ENCODE measurements at regions of chr2 and their contacts with region 1.

Region 1: DNA sequence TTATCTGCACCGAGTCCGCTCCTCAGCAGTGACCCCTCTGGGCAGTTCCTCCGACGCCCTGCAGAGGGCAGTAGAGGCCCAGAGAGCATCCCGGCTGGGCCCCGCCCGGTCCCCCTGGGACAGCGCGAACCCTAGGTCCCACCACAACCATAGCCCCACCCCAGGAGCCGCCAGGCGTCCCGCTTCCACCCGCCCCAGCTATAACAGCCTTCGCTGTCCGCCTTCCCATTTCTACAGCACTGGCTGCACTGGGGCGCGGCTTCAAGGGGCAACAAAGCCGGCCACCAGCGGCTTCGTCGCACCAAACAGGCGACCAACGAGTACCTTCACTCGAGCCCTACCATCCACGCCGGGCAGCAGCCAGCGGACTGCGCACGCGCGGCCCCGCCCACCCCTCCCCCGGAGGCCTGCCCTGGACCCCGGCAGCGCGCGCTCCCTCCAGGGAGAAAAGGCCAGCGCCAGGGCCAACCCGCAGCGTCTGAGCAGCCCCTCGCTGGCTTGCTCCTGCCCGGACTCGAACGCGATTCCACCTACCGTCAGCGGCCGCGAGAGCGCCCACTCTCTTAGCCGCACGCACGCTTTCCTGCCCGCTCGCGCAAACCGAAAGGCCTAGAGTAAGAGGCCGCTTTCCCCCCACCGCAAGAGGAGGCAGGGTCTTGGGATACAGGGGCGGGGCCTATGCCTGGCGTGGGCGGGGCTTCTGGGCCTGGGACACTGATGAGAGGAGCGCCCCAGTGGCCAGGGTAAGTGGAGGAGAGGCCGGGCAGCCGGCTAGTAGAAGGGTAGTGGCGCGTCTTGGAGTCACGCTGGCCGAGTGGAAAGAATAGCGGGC is at the start of gene NHEJ1:
- DNase-seq: peak; percentile 97
- ATAC-seq: peak; percentile 89
- H3K4me3 Mint-ChIP-seq: peak within 1 kb of the TSS; percentile 81
- H3K27ac Mint-ChIP-seq: peak within 1 kb of the TSS; percentile 88
- H3K4me1 Mint-ChIP-seq: peaks cover 13% of the 10 kb centered on the region
- H3K27me3 Mint-ChIP-seq: no peaks in the 10 kb centered on the region
- total RNA-seq, gene NHEJ1: 20.7 to 23.8 TPM

Region 2: DNA sequence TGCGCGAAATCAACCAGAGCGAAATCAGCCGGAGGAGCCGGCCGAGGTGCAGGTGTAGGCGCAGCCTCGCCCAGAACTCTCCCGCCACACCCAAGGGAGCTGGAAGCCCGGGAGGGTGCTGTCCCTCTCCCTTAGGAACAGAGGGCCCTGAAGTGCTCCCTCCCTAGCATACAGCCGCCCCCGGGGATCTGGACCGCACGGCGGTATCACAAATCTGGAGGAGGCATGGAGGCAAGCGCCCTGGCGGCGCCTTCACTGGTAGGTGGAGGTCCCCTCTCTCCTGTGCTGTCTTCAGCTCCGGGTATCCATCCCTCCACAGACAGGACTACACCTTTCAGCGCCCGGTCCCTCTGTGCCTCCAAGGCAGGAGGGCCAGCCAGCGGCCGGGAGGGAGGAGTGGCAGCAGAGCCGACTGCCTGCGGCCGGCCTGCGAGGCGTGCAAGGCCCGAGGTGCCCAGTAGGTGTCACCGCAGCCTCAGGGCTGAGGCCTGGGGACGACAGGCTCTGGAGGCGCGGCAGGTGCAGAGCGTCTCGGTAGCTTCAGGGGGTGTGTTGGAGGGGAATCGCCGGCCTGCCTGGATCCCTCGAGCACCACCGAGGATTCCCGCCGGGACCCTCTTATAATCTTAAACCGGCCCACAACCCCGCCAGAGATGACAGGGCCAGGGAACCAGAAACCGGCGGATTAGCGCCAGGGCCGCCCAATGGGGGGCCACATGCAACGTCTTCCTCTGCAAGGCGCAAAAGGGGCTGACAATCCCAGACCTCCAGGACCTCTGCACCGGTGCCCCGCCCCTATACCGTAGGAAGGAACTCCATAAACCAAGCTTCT is 102.5 kb before region 1 on chr2:
- CTCF ChIA-PET with region 1: interaction called, 125 read pairs
- POLR2A ChIA-PET with region 1: no interaction called
- intact Hi-C with region 1: loop called (anchors 1 kb)
- DNase-seq: peak; percentile 90
- ATAC-seq: peak; percentile 97
- H3K4me3 Mint-ChIP-seq: no peak overlapping the region
- H3K27ac Mint-ChIP-seq: no peak overlapping the region
- H3K4me1 Mint-ChIP-seq: peaks cover 19% of the 10 kb centered on the region
- H3K27me3 Mint-ChIP-seq: peaks cover 56% of the 10 kb centered on the region

Region 3: GRCh38 chr2:219206442-219207253 is 46.2 kb after region 1 on chr2 and contains the start of gene ZFAND2B:
- CTCF ChIA-PET with region 1: interaction called, 8 read pairs
- POLR2A ChIA-PET with region 1: interaction called, 6 read pairs
- intact Hi-C with region 1: loop called (anchors 1 kb)
- DNase-seq: peak; percentile 98
- ATAC-seq: peak; percentile 96
- H3K4me3 Mint-ChIP-seq: peak within 1 kb of the TSS; percentile 86
- H3K27ac Mint-ChIP-seq: peak within 1 kb of the TSS; percentile 94
- H3K4me1 Mint-ChIP-seq: peaks cover 34% of the 10 kb centered on the region
- H3K27me3 Mint-ChIP-seq: no peaks in the 10 kb centered on the region
- total RNA-seq, gene ZFAND2B: 21.5 to 27.6 TPM

Region 4: DNA sequence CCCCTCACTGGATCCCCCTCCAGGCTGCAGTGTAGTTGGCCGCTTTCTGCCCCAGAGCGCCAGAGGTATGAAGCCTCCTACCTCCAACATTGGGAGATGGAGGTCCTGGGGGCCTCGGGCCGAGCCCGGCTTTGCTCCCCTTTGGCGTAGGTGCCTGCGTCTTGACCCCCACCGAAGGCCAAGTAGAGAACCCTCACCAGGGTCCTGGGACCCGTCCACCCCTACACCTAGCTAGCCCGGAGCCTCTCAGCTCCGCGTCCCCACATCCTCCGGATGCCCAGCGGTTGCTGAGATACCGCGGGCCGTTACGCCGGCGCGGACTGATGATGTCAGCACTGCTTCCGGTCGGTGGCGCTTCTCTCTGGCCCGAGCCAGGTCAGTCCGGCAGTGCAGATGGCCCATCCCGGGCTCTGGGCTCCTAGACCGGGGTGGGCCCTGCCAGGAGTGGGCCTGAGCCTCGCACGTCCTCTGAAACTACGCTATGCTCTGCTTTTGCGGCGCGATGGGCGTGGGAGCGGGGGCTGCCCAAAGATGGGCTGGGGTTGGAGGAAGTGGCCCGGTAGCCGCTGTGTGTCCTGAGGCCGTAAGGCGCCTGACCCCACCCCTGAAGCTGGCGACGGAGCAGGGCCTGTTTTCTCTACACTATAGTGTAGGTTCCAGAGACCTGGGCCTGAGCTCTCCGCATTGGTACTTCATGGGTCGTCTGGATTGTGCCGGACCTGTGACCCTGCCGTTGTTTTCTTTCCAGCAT is 84.9 kb after region 1 on chr2 and contains the starts of genes GLB1L and STK16:
- CTCF ChIA-PET with region 1: interaction called, 5 read pairs
- POLR2A ChIA-PET with region 1: interaction called, 3 read pairs
- intact Hi-C with region 1: loop called in 1 of 2 experiments (anchors 1 kb)
- DNase-seq: peak; percentile 93
- ATAC-seq: peak; percentile 62
- H3K4me3 Mint-ChIP-seq: peak within 1 kb of the TSS; percentile 89
- H3K27ac Mint-ChIP-seq: peak within 1 kb of the TSS; percentile 100
- H3K4me1 Mint-ChIP-seq: peaks cover 59% of the 10 kb centered on the region
- H3K27me3 Mint-ChIP-seq: no peaks in the 10 kb centered on the region
- total RNA-seq, gene GLB1L: 2.7 to 4.2 TPM
- total RNA-seq, gene STK16: 34.3 to 35.4 TPM

Region 5: DNA sequence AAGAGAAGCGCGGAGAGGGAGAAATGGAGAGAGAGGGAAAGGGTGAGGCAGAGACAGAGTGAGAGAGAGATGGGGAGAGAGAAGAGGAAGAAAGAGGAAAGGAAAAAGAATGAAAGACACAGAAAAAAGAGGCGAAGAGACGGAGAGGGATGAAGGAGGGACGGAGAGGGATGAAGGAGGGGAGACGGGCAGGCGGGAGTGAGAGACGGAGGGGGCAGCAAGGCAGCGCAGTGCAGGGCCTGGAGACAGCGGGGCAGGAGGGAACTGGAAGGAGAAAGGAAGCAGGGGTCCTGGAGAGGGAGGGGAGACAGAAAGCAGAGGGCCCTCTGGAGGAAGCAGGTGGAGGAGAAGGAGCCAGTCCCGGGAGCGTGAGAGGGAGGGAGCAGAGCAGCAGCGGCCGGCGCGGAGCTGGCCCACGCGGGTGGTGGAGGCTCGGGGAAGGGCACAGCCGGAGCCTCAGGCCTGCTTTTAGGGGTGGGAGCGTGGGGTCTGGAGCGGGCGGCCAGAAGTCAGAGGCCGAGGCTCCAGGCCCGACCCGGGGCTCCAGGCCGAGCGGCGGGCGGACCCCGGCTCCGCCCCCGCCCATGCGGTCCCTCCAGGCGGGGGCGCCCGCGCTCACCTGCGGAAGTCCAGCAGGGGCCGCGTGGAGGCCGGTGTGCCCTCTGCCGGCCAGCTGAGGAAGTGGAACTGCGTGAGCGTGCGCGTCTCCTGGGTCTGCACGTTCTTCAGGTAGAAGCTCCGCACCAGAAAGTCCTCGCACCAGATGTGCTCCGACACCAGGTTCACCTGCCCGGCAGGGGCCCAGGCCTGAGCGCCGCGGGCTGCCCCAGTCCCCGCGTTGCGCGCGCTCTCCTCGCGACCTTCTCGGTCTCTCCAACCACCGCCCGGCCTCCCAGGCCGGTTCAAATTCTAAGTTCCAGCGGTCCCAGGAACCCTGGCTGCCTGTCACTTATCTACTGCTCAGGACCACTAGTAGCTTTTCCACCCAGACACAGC is 134.3 kb after region 1 on chr2:
- CTCF ChIA-PET with region 1: interaction called, 50 read pairs
- POLR2A ChIA-PET with region 1: no interaction called
- intact Hi-C with region 1: loop called (anchors 1 kb)
- DNase-seq: peak; percentile 93
- ATAC-seq: peak; percentile 90
- H3K4me3 Mint-ChIP-seq: peak overlapping the region; percentile 68
- H3K27ac Mint-ChIP-seq: peak overlapping the region; percentile 84
- H3K4me1 Mint-ChIP-seq: peaks cover 22% of the 10 kb centered on the region
- H3K27me3 Mint-ChIP-seq: no peaks in the 10 kb centered on the region